Activated CD8-positive, alpha-beta memory T cell treated with anti-CD3 and anti-CD28 coated beads, Interleukin-2, amount 10 ng/mL, durations not matched to agents 7 days and 5 days (primary cell): ENCODE measurements at regions of chr2 and their contacts with region 1.

Region 1: GRCh38 chr2:26745609-26746327 is 18.3 kb upstream of the SLC35F6 start:
- DNase-seq: peak; percentile 87
- ATAC-seq: peak; percentile 65
- H3K4me3 Mint-ChIP-seq: no peak overlapping the region
- H3K27ac Mint-ChIP-seq: no peak overlapping the region
- H3K4me1 Mint-ChIP-seq: peaks cover 10% of the 10 kb centered on the region
- H3K27me3 Mint-ChIP-seq: no peaks in the 10 kb centered on the region

Region 2: GRCh38 chr2:26591619-26592505 is 153.9 kb before region 1 on chr2:
- CTCF ChIA-PET with region 1: interaction called, 11 read pairs
- DNase-seq: no peak
- ATAC-seq: no peak
- H3K4me3 Mint-ChIP-seq: no peak overlapping the region
- H3K27ac Mint-ChIP-seq: no peak overlapping the region
- H3K4me1 Mint-ChIP-seq: peaks cover 8% of the 10 kb centered on the region
- H3K27me3 Mint-ChIP-seq: peaks cover 48% of the 10 kb centered on the region

Region 3: GRCh38 chr2:26598336-26598995 is 147.3 kb before region 1 on chr2:
- CTCF ChIA-PET with region 1: interaction called, 178 read pairs
- DNase-seq: no peak
- ATAC-seq: no peak
- H3K4me3 Mint-ChIP-seq: no peak overlapping the region
- H3K27ac Mint-ChIP-seq: no peak overlapping the region
- H3K4me1 Mint-ChIP-seq: peaks cover 3% of the 10 kb centered on the region
- H3K27me3 Mint-ChIP-seq: peaks cover 52% of the 10 kb centered on the region

Region 4: GRCh38 chr2:26605195-26605998 is 140.4 kb before region 1 on chr2:
- CTCF ChIA-PET with region 1: interaction called, 178 read pairs
- DNase-seq: peak; percentile 55
- ATAC-seq: peak; percentile 72
- H3K4me3 Mint-ChIP-seq: no peak overlapping the region
- H3K27ac Mint-ChIP-seq: no peak overlapping the region
- H3K4me1 Mint-ChIP-seq: no peaks in the 10 kb centered on the region
- H3K27me3 Mint-ChIP-seq: peaks cover 39% of the 10 kb centered on the region

Region 5: GRCh38 chr2:26735096-26735495 is 10.7 kb before region 1 on chr2:
- CTCF ChIA-PET with region 1: interaction called, 16 read pairs
- DNase-seq: no peak
- ATAC-seq: no peak
- H3K4me3 Mint-ChIP-seq: no peak overlapping the region
- H3K27ac Mint-ChIP-seq: no peak overlapping the region
- H3K4me1 Mint-ChIP-seq: peaks cover 2% of the 10 kb centered on the region
- H3K27me3 Mint-ChIP-seq: peaks cover 22% of the 10 kb centered on the region

Region 6: DNA sequence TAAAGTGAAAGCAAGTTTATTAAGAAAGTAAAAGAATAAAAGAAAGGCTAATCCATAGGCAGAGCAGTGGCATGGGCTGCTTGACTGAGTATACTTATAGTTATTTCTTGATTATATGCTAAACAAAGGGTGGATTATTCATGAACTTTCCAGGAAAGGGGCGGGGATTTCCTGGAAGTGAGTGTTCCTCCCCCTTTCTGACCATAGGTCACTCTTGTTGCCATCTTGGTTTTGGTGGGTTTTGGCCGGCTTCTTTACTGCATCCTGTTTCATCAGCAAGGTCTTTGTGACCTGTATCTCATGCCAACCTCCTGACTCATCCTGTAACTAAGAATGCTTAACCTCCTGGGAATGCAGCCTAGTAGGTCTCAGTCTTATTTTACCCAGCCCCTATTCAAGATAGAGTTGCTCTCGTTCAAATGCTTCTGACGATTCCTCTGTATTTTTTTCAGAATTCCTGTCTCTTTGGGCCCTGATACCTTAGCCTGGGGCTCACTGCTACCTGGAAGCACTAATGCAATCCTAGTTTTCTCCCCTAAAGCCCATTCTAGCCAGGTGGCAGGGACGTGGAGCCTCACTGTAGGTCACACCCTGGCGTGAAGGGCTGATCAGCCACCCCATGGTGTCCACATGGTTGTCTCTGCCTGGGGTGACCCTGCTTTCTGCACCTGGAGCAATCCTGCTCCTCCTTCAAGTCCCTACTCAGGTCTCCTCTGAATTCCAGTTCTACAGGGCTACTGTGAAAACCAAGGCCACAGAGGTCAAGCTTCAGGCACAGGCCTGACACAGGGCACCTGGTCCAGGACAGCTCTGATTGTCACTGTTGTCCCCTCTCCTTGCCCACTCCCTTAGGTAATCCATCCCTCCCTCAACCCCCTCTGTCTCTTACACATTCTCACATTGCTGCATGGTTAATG is 12.4 kb after region 1 on chr2:
- CTCF ChIA-PET with region 1: interaction called, 11 read pairs
- DNase-seq: peak; percentile 63
- ATAC-seq: peak; percentile 36
- H3K4me3 Mint-ChIP-seq: no peak overlapping the region
- H3K27ac Mint-ChIP-seq: peak overlapping the region; percentile 45
- H3K4me1 Mint-ChIP-seq: peaks cover 26% of the 10 kb centered on the region
- H3K27me3 Mint-ChIP-seq: peaks cover 6% of the 10 kb centered on the region

Region 7: GRCh38 chr2:27003857-27004256 is 258.1 kb after region 1 on chr2:
- CTCF ChIA-PET with region 1: no interaction called
- DNase-seq: no peak
- ATAC-seq: no peak
- H3K4me3 Mint-ChIP-seq: no peak overlapping the region
- H3K27ac Mint-ChIP-seq: no peak overlapping the region
- H3K4me1 Mint-ChIP-seq: no peaks in the 10 kb centered on the region
- H3K27me3 Mint-ChIP-seq: peaks cover 24% of the 10 kb centered on the region